HepG2 (cell line): ENCODE measurements at regions of chr20 and their contacts with region 1.

Region 1: GRCh38 chr20:20712474-20713243 is at the start of gene RALGAPA2:
- DNase-seq: peak; percentile 100
- ATAC-seq: peak; percentile 96
- H3K4me3 ChIP-seq: peak within 1 kb of the TSS; percentile 83 to 99 (median 94)
- H3K27ac ChIP-seq: peak within 1 kb of the TSS; percentile 77
- H3K4me1 ChIP-seq: peaks cover 34% of the 10 kb centered on the region
- H3K27me3 ChIP-seq: no peaks in the 10 kb centered on the region; a peak in 2 of 5 replicates
- CTCF ChIP-seq: peak; percentile 53
- EP300 ChIP-seq: no peak
- POLR2A ChIP-seq: peak; percentile 86 to 94
- RAD21 ChIP-seq: peak; percentile 29; the same call in 1 of the 2 replicates
- total RNA-seq, gene RALGAPA2: 17.7 and 18.3 TPM in 2 replicates

Region 2: DNA sequence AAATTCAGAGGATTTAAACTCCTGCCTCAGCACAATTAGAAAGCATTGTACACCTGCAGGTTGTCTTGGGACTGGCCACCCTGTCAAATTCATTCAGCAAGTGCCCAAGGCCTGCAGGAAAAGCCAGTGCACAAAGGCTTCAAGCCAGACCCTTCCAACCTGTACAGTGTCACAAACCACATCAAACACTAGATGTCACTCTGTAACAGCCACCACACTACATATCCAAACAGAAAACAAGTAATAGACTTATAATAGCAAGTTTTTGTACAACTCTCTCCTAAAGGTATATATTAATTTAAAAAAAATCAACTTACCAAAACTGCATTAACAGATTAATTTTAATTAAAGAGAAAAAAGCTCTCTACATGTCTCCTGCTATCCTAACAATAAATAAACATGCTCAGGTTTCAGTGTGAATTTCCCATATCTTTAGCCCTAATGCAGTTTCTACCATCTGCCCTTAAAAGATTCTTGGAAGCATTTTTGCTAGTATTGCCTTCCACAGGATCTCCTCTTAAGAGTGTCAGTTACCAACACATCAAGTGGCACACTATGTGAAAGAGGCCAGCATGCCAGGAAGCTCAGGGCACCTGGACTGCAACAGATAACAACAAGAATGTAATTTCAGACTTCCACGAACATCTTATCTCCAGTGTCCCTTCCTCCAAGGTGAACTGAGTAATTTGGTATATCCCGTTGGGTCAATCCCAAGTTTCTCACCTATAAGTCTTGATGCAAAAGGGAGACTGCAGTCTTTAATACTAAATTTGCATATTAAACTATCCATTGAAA is 47.7 kb before region 1 on chr20:
- CTCF ChIA-PET with region 1: no interaction called
- POLR2A ChIA-PET with region 1: no interaction called
- in situ Hi-C with region 1: no loop called
- intact Hi-C with region 1: loop called (anchors 1 kb)
- DNase-seq: peak; percentile 71
- ATAC-seq: peak; percentile 99
- H3K4me3 ChIP-seq: no peak overlapping the region
- H3K27ac ChIP-seq: no peak overlapping the region
- H3K4me1 ChIP-seq: no peaks in the 10 kb centered on the region
- H3K27me3 ChIP-seq: no peaks in the 10 kb centered on the region
- CTCF ChIP-seq: peak; percentile 89
- EP300 ChIP-seq: no peak
- POLR2A ChIP-seq: no peak
- RAD21 ChIP-seq: peak; percentile 85

Region 3: DNA sequence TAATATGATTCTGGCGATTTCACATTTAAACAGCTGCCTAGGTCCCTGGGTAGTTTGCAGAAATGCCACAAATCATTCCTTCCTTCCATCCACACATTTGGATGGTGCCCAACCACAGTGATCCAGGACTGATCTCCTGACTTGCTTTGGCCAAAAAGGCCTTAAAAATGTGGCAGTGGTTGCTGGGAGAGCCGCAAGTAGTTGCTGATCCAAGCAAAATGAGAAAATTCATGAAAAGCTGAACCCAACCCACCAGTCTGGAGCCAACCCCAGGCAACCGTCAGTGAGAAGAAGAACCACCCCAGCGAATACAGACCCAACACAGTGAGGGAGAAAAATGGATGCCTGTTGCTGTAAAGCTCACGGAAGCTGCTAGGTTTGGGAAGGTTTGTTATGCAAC is 25.3 kb before region 1 on chr20:
- CTCF ChIA-PET with region 1: no interaction called
- POLR2A ChIA-PET with region 1: no interaction called
- in situ Hi-C with region 1: no loop called
- intact Hi-C with region 1: no loop called
- DNase-seq: no peak
- ATAC-seq: no peak
- H3K4me3 ChIP-seq: no peak overlapping the region
- H3K27ac ChIP-seq: no peak overlapping the region
- H3K4me1 ChIP-seq: peaks cover 14% of the 10 kb centered on the region
- H3K27me3 ChIP-seq: no peaks in the 10 kb centered on the region
- CTCF ChIP-seq: no peak
- EP300 ChIP-seq: no peak
- POLR2A ChIP-seq: no peak
- RAD21 ChIP-seq: no peak

Region 4: GRCh38 chr20:20699144-20699543 is 13.5 kb before region 1 on chr20:
- CTCF ChIA-PET with region 1: no interaction called
- POLR2A ChIA-PET with region 1: interaction called, 23 read pairs
- in situ Hi-C with region 1: no loop called
- intact Hi-C with region 1: loop called (anchors 1 kb)
- DNase-seq: peak; percentile 95
- ATAC-seq: peak; percentile 86
- H3K4me3 ChIP-seq: no peak overlapping the region; a peak in 2 of 6 replicates
- H3K27ac ChIP-seq: peak overlapping the region; percentile 8
- H3K4me1 ChIP-seq: peaks cover 59% of the 10 kb centered on the region
- H3K27me3 ChIP-seq: no peaks in the 10 kb centered on the region
- CTCF ChIP-seq: no peak
- EP300 ChIP-seq: peak; percentile 53 to 92; a peak in 2 of 4 replicates
- POLR2A ChIP-seq: no peak
- RAD21 ChIP-seq: no peak

Region 5: GRCh38 chr20:20759132-20759531 is 46.5 kb after region 1 on chr20:
- CTCF ChIA-PET with region 1: no interaction called
- POLR2A ChIA-PET with region 1: no interaction called
- in situ Hi-C with region 1: no loop called
- intact Hi-C with region 1: no loop called
- DNase-seq: peak; percentile 63
- ATAC-seq: peak; percentile 66
- H3K4me3 ChIP-seq: 0 out of 6 replicates have a peak overlapping the region, but pooled peaks of 1 of the 3 experiments have one; percentile 13
- H3K27ac ChIP-seq: no peak overlapping the region
- H3K4me1 ChIP-seq: peaks cover 38% of the 10 kb centered on the region
- H3K27me3 ChIP-seq: no peaks in the 10 kb centered on the region
- CTCF ChIP-seq: no peak
- EP300 ChIP-seq: peak in 1 of 2 experiments; percentile 15; a peak in 1 of 4 replicates
- POLR2A ChIP-seq: no peak
- RAD21 ChIP-seq: no peak